CD4-positive, alpha-beta T cell (primary cell): ENCODE measurements at regions of chr4 and their contacts with region 1.

Region 1: GRCh38 chr4:120049732-120050494 is 16.7 kb downstream of the MAD2L1 start:
- DNase-seq: peak; percentile 36 to 84 (median 60)
- ATAC-seq: peak; percentile 97
- H3K4me3 ChIP-seq: no peak overlapping the region
- H3K4me3 Mint-ChIP-seq: no peak overlapping the region
- H3K27ac ChIP-seq: no peak overlapping the region
- H3K27ac Mint-ChIP-seq: no peak overlapping the region
- H3K4me1 ChIP-seq: peaks cover 4% of the 10 kb centered on the region
- H3K4me1 Mint-ChIP-seq: peaks cover 4% of the 10 kb centered on the region
- H3K27me3 ChIP-seq: no peaks in the 10 kb centered on the region
- H3K27me3 Mint-ChIP-seq: no peaks in the 10 kb centered on the region
- CTCF ChIP-seq: peak; percentile 89

Region 2: DNA sequence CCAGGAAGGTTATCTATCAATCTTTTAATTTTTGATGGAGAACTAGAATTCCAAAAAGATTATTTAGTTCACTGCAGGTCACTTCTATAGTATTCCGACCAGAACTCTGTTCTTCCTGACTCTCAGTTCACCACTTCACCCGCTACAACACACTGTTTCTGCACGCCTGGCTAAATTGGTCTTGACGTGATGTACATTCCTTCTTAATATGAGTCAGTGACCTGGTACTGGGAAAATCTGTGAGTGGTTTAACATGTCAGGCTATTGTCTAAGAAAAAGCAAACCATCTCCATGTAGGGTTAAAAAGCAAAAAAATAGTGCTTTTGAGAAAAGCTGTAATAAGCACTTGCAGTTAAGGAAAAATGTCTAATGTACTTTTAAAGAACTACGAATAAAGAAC is 1895.3 kb before region 1 on chr4:
- CTCF ChIA-PET with region 1: no interaction called
- POLR2A ChIA-PET with region 1: no interaction called
- intact Hi-C with region 1: no loop called
- DNase-seq: no peak
- ATAC-seq: no peak
- H3K4me3 ChIP-seq: no peak overlapping the region
- H3K4me3 Mint-ChIP-seq: no peak overlapping the region
- H3K27ac ChIP-seq: no peak overlapping the region
- H3K27ac Mint-ChIP-seq: no peak overlapping the region
- H3K4me1 ChIP-seq: no peaks in the 10 kb centered on the region
- H3K4me1 Mint-ChIP-seq: no peaks in the 10 kb centered on the region
- H3K27me3 ChIP-seq: no peaks in the 10 kb centered on the region
- H3K27me3 Mint-ChIP-seq: no peaks in the 10 kb centered on the region
- CTCF ChIP-seq: no peak

Region 3: DNA sequence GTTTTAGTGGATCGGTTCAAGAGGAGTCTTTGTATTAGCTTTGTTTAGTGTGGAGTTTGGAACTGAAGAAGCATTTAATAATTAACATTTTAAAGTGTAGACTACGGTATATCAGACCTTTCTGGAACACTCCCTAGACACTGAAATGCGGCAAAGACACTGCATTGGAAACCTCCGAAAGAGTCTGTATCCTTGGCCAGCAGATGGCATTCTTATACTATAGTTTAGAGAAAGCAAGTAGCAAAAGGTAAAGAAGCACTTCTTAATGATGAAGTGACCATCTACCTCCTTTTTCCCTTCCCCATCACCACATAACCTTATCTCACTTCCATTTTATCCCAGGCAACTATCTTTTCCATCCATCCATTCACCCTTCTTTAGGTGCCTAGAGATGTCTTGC is 735.6 kb before region 1 on chr4:
- CTCF ChIA-PET with region 1: no interaction called
- POLR2A ChIA-PET with region 1: no interaction called
- intact Hi-C with region 1: loop called (anchors 1 to 2 kb)
- DNase-seq: peak in 10 of 14 experiments; percentile 2 to 70 (median 8)
- ATAC-seq: peak; percentile 85
- H3K4me3 ChIP-seq: no peak overlapping the region
- H3K4me3 Mint-ChIP-seq: no peak overlapping the region
- H3K27ac ChIP-seq: no peak overlapping the region
- H3K27ac Mint-ChIP-seq: no peak overlapping the region
- H3K4me1 ChIP-seq: no peaks in the 10 kb centered on the region
- H3K4me1 Mint-ChIP-seq: no peaks in the 10 kb centered on the region
- H3K27me3 ChIP-seq: peaks cover 0 to 2% of the 10 kb centered on the region in 2 experiments
- H3K27me3 Mint-ChIP-seq: peaks cover 16% of the 10 kb centered on the region
- CTCF ChIP-seq: peak; percentile 69

Region 4: GRCh38 chr4:119559044-119559647 is 490.8 kb before region 1 on chr4:
- CTCF ChIA-PET with region 1: no interaction called
- POLR2A ChIA-PET with region 1: no interaction called
- intact Hi-C with region 1: loop called (anchors 2 to 5 kb)
- DNase-seq: peak in 3 of 14 experiments; percentile 11 to 14 (median 11)
- ATAC-seq: no peak
- H3K4me3 ChIP-seq: no peak overlapping the region
- H3K4me3 Mint-ChIP-seq: no peak overlapping the region
- H3K27ac ChIP-seq: no peak overlapping the region
- H3K27ac Mint-ChIP-seq: no peak overlapping the region
- H3K4me1 ChIP-seq: no peaks in the 10 kb centered on the region
- H3K4me1 Mint-ChIP-seq: no peaks in the 10 kb centered on the region
- H3K27me3 ChIP-seq: no peaks in the 10 kb centered on the region
- H3K27me3 Mint-ChIP-seq: no peaks in the 10 kb centered on the region
- CTCF ChIP-seq: no peak

Region 5: GRCh38 chr4:119628308-119629141 is 421.4 kb before region 1 on chr4 and contains the start of gene PDE5A:
- CTCF ChIA-PET with region 1: interaction called, 7 read pairs
- POLR2A ChIA-PET with region 1: no interaction called
- intact Hi-C with region 1: loop called (anchors 2 to 10 kb)
- DNase-seq: peak; percentile 54 to 87 (median 71)
- ATAC-seq: peak; percentile 83
- H3K4me3 ChIP-seq: peak within 1 kb of the TSS; percentile 64
- H3K4me3 Mint-ChIP-seq: peak within 1 kb of the TSS; percentile 94
- H3K27ac ChIP-seq: peak within 1 kb of the TSS in 1 of 2 donors; percentile 41
- H3K27ac Mint-ChIP-seq: peak within 1 kb of the TSS; percentile 75
- H3K4me1 ChIP-seq: peaks cover 23% of the 10 kb centered on the region
- H3K4me1 Mint-ChIP-seq: peaks cover 28% of the 10 kb centered on the region
- H3K27me3 ChIP-seq: peaks cover 5 to 6% of the 10 kb centered on the region in 2 experiments
- H3K27me3 Mint-ChIP-seq: peaks cover 32% of the 10 kb centered on the region
- CTCF ChIP-seq: peak; percentile 74
- total RNA-seq, gene PDE5A: 0.11 to 0.56 TPM